Endothelial cell of umbilical vein (primary cell): ENCODE measurements at regions of chr13 and their contacts with region 1.

Region 1: GRCh38 chr13:21476893-21477472 is 17.9 kb upstream of the ZDHHC20 start:
- DNase-seq: peak; percentile 75
- H3K4me3 ChIP-seq: peak overlapping the region in 2 of 3 experiments; percentile 3 to 26
- H3K27ac ChIP-seq: no peak overlapping the region
- H3K4me1 ChIP-seq: peaks cover 2% of the 10 kb centered on the region
- H3K27me3 ChIP-seq: no peaks in the 10 kb centered on the region
- CTCF ChIP-seq: peak; percentile 93 to 99
- POLR2A ChIP-seq: no peak

Region 2: GRCh38 chr13:20940083-20940880 is 536.7 kb before region 1 on chr13:
- CTCF ChIA-PET with region 1: interaction called, 8 read pairs
- POLR2A ChIA-PET with region 1: no interaction called
- dilution Hi-C with region 1: no loop called
- intact Hi-C with region 1: loop called (anchors 1 kb)
- DNase-seq: no peak
- H3K4me3 ChIP-seq: no peak overlapping the region
- H3K27ac ChIP-seq: no peak overlapping the region
- H3K4me1 ChIP-seq: no peaks in the 10 kb centered on the region
- H3K27me3 ChIP-seq: no peaks in the 10 kb centered on the region
- CTCF ChIP-seq: no peak
- POLR2A ChIP-seq: no peak

Region 3: DNA sequence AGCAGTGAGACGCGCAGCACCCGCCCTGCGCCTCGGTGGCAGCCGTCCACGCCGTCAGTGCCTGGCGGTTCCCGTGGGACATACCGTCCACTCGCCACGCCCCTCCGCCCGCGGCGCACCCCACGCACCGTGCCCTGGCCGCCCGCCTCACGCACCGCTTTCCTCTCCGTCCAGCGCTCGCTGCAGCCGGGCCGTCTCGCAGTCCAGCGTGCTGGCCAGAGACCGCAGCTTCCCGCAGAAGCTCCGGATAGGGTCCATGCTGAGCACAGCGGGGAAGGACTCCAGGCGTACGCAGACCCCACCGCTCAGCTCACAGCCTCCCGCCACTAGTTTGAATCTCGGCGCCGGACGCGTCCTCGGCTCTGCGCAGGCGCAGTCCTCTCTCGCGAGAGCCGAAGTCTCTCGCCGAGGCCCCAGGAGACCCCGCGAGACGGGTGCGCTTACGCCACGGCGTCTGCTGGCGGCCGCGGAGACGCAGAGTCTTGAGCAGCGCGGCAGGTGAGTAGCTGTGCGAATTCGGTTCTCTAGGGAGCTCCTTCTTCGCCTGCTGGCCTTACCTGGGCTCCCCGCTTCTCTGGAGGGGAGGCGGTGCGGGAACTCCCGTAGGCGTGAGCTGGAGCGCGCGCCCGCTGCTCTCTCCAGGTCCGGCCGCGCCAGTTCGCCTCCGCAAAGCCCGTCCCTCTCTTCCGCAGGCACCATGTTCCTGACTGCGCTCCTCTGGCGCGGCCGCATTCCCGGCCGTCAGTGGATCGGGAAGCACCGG is 300.6 kb before region 1 on chr13 and contains the starts of genes MRPL57 and SKA3:
- CTCF ChIA-PET with region 1: interaction called, 5 read pairs
- POLR2A ChIA-PET with region 1: no interaction called
- dilution Hi-C with region 1: no loop called
- intact Hi-C with region 1: loop called (anchors 1 kb)
- DNase-seq: peak; percentile 96
- H3K4me3 ChIP-seq: peak within 1 kb of the TSS; percentile 81 to 96 (median 89)
- H3K27ac ChIP-seq: peak within 1 kb of the TSS; percentile 76
- H3K4me1 ChIP-seq: peaks cover 12% of the 10 kb centered on the region
- H3K27me3 ChIP-seq: no peaks in the 10 kb centered on the region
- CTCF ChIP-seq: peak in 1 of 2 donors; percentile 7
- POLR2A ChIP-seq: peak; percentile 85
- total RNA-seq, gene MRPL57: 19.5 and 23.1 TPM in 2 replicates
- total RNA-seq, gene SKA3: 25.9 and 28.7 TPM in 2 replicates

Region 4: GRCh38 chr13:21338156-21338555 is 138.8 kb before region 1 on chr13:
- CTCF ChIA-PET with region 1: interaction called, 6 read pairs
- POLR2A ChIA-PET with region 1: no interaction called
- dilution Hi-C with region 1: no loop called
- intact Hi-C with region 1: loop called (anchors 1 kb)
- DNase-seq: no peak
- H3K4me3 ChIP-seq: no peak overlapping the region
- H3K27ac ChIP-seq: no peak overlapping the region
- H3K4me1 ChIP-seq: no peaks in the 10 kb centered on the region
- H3K27me3 ChIP-seq: no peaks in the 10 kb centered on the region
- CTCF ChIP-seq: no peak
- POLR2A ChIP-seq: no peak

Region 5: DNA sequence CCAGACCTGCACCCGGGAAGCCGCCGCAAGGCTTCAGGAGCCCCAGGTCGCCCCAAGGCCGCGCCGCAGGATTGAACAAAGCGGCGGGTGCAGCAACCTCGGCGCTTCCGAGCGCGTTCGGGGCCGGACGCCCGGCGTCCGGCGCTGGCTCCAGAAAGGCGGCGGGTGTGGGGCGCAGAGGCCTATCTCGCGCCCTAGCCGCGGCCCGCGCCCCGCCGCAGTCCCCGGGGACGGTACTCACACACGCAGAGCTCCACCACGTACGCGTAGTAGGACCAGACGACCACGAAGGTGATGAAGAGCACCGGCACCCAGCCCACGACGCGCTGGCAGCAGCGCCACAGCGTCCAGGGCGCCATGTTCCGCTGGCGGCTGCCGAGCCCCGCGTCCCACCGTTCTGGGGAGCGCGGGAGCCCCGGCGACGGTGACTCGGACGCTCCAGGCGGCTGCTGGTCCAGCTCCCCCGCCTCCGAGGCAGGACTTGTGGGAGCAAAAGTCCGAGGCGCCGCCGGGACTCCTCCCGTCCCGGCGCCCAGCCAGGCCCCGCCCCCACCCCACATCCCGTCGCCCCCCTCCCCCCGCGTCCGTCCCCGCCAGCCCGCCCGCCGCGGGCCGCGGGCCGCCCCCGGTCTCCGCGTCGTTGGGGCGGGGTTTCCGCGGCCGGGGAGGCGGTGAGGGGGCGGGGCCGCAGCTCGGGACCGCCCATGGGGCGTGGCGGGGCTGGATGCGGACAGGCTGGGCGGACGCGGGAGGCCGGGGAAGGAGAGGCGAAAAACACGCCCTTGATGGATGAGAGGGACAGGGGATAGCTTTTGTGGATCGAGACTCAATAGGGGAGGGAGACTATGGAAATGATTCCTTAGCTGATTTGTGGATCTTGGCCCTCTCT is 17.9 kb before region 1 on chr13 and contains the start of gene ZDHHC20:
- CTCF ChIA-PET with region 1: interaction called, 12 read pairs
- POLR2A ChIA-PET with region 1: no interaction called
- dilution Hi-C with region 1: no loop called
- intact Hi-C with region 1: no loop called
- DNase-seq: peak; percentile 82
- H3K4me3 ChIP-seq: peak within 1 kb of the TSS; percentile 89 to 98 (median 95)
- H3K27ac ChIP-seq: peak within 1 kb of the TSS; percentile 93
- H3K4me1 ChIP-seq: peaks cover 10% of the 10 kb centered on the region
- H3K27me3 ChIP-seq: no peaks in the 10 kb centered on the region
- CTCF ChIP-seq: no peak
- POLR2A ChIP-seq: peak; percentile 78
- total RNA-seq, gene ZDHHC20: 57.5 and 59.4 TPM in 2 replicates

Region 6: DNA sequence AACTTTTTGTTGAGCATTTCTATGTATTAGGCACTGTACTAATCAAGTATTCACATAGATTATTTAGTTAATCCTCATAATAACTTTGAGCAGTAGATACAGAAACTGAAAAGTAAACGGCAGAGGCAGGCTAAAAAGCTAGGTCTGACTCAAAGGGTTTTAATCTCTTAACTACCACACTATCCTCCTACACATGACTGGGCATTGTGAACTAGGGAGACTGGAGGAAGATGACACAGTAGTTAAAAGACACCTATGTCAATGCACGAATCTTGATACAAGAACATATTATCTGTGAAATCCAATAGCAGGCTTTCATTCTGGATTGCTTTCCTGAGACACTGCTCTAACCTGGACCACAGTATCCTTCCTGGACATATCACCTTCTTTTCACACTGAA is 90.7 kb after region 1 on chr13:
- CTCF ChIA-PET with region 1: no interaction called
- POLR2A ChIA-PET with region 1: no interaction called
- dilution Hi-C with region 1: no loop called
- intact Hi-C with region 1: no loop called
- DNase-seq: no peak
- H3K4me3 ChIP-seq: no peak overlapping the region
- H3K27ac ChIP-seq: no peak overlapping the region
- H3K4me1 ChIP-seq: no peaks in the 10 kb centered on the region
- H3K27me3 ChIP-seq: no peaks in the 10 kb centered on the region
- CTCF ChIP-seq: no peak
- POLR2A ChIP-seq: no peak